GM12878 (cell line): ENCODE measurements at regions of chr3 and their contacts with region 1.

Region 1: GRCh38 chr3:94249585-94249984 is 186.7 kb downstream of the NSUN3 start:
- DNase-seq: peak; percentile 7
- ATAC-seq: peak; percentile 84
- H3K4me3 ChIP-seq: no peak overlapping the region
- H3K27ac ChIP-seq: no peak overlapping the region
- H3K4me1 ChIP-seq: no peaks in the 10 kb centered on the region
- H3K27me3 ChIP-seq: no peaks in the 10 kb centered on the region
- CTCF ChIP-seq: peak; percentile 77 to 86 (median 79)
- EP300 ChIP-seq: no peak
- POLR2A ChIP-seq: no peak
- RAD21 ChIP-seq: peak; percentile 91

Region 2: GRCh38 chr3:94004301-94004910 is 245.2 kb before region 1 on chr3:
- CTCF ChIA-PET with region 1: interaction called, 11 read pairs
- POLR2A ChIA-PET with region 1: no interaction called
- RAD21 ChIA-PET with region 1: no interaction called
- SMC1A ChIA-PET with region 1: interaction called, 4 read pairs
- in situ Hi-C with region 1: no loop called
- intact Hi-C with region 1: loop called (anchors 5 kb)
- DNase-seq: peak; percentile 44
- ATAC-seq: peak; percentile 92
- H3K4me3 ChIP-seq: no peak overlapping the region
- H3K27ac ChIP-seq: no peak overlapping the region; the same call in 1 of the 2 replicates
- H3K4me1 ChIP-seq: no peaks in the 10 kb centered on the region
- H3K27me3 ChIP-seq: no peaks in the 10 kb centered on the region
- CTCF ChIP-seq: peak; percentile 78 to 90 (median 84)
- EP300 ChIP-seq: no peak
- POLR2A ChIP-seq: no peak
- RAD21 ChIP-seq: peak; percentile 95

Region 3: GRCh38 chr3:94009608-94010007 is 240.0 kb before region 1 on chr3:
- CTCF ChIA-PET with region 1: interaction called, 11 read pairs
- POLR2A ChIA-PET with region 1: no interaction called
- RAD21 ChIA-PET with region 1: no interaction called
- SMC1A ChIA-PET with region 1: interaction called, 4 read pairs
- in situ Hi-C with region 1: no loop called
- intact Hi-C with region 1: loop called (anchors 5 kb)
- DNase-seq: no peak
- ATAC-seq: no peak
- H3K4me3 ChIP-seq: no peak overlapping the region
- H3K27ac ChIP-seq: no peak overlapping the region
- H3K4me1 ChIP-seq: no peaks in the 10 kb centered on the region
- H3K27me3 ChIP-seq: no peaks in the 10 kb centered on the region
- CTCF ChIP-seq: no peak
- EP300 ChIP-seq: no peak
- POLR2A ChIP-seq: no peak
- RAD21 ChIP-seq: no peak

Region 4: DNA sequence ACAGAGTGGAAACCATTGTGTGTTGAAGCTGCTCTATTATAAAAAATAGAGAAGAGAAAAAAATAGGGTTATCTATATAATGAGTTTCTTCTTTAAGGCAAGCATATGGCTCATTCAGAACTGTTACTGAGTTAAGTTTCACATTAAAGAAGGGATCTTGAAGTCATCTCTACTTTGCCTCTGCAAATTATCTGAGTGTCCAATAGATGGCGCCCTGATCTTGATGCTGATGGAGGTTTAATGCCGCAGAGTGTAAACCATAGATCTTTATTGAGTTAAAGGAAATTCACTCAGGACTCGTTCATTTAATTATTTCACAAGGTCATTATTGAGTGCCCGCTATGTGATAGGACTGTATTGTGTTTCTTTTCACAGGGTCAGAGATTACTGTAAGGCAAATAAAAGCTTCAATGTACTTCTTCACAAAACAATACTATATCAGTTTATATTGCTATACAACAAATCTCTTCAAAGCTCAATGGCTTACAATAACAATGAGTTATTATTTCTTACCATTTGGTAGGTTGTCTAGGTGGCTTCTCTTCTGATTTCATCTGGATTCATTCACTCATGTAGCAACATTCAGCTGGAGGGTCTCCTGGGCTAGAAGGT is 15.3 kb before region 1 on chr3:
- CTCF ChIA-PET with region 1: interaction called, 11 read pairs
- POLR2A ChIA-PET with region 1: no interaction called
- RAD21 ChIA-PET with region 1: interaction called, 3 read pairs
- SMC1A ChIA-PET with region 1: interaction called, 3 read pairs
- in situ Hi-C with region 1: no loop called
- intact Hi-C with region 1: no loop called
- DNase-seq: no peak
- ATAC-seq: peak; percentile 88
- H3K4me3 ChIP-seq: no peak overlapping the region
- H3K27ac ChIP-seq: no peak overlapping the region
- H3K4me1 ChIP-seq: no peaks in the 10 kb centered on the region
- H3K27me3 ChIP-seq: no peaks in the 10 kb centered on the region
- CTCF ChIP-seq: peak; percentile 44 to 53 (median 51); a peak in 5 of 6 replicates
- EP300 ChIP-seq: no peak
- POLR2A ChIP-seq: no peak
- RAD21 ChIP-seq: peak; percentile 48

Region 5: GRCh38 chr3:94269763-94270162 is 20.2 kb after region 1 on chr3:
- CTCF ChIA-PET with region 1: interaction called, 39 read pairs
- POLR2A ChIA-PET with region 1: no interaction called
- RAD21 ChIA-PET with region 1: no interaction called
- SMC1A ChIA-PET with region 1: interaction called, 5 read pairs
- in situ Hi-C with region 1: no loop called
- intact Hi-C with region 1: no loop called
- DNase-seq: no peak
- ATAC-seq: no peak
- H3K4me3 ChIP-seq: no peak overlapping the region
- H3K27ac ChIP-seq: no peak overlapping the region
- H3K4me1 ChIP-seq: no peaks in the 10 kb centered on the region
- H3K27me3 ChIP-seq: no peaks in the 10 kb centered on the region
- CTCF ChIP-seq: no peak
- EP300 ChIP-seq: no peak
- POLR2A ChIP-seq: no peak
- RAD21 ChIP-seq: no peak